ENCODE measurements at regions of chr2 and their contacts with region 1.

Region 1: DNA sequence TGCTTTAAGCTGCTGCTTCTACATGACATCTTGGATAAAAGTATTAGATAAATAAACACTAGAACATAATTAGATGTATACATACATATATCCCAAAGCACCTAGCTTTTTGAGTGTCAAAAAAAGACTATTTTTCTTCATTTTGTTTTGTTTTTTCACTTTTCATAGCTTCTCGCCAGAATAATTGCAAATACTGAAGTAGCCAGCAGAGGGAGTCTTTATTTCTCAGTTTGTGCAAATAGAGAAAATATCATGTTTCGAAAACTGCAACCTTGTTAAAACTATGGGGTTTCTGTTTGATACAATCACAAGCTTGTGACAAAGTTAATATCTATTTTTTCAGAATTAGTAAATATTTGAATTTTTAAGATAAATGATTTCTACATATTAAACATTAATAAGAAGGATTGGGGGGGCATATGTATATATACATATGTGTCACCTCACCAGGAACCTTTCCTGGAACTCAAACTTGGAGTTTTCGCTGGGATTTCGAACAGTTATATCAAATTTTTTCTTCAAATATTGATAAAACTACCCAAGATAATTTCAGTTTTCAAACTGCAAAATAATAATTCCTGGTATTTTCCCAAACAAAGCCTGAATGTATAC is 61.0 kb downstream of the GRB14 start:
- DNase-seq: no peak
- ATAC-seq: no peak

Region 2: GRCh38 chr2:164371916-164372315 is 188.4 kb before region 1 on chr2:
- intact Hi-C with region 1: no loop called
- DNase-seq: no peak
- ATAC-seq: no peak

Region 3: DNA sequence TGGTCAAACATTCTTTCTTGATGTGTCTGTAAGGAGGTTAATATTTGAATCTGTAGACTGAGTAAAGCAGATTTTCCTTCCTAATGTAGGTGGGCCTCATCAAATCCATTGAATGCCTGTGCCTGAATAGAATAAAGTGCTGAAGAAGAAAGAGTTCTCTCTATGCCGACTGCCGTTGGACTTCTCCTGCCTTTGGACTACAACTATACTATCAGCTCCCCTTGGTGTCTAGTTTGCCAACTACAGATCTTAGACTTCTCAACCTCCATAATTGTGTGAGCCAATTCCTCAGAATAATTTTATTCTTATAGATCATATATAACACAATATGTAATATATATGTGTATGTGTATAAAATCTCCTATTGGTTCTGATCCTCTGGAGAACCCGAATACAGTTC is 142.9 kb before region 1 on chr2:
- intact Hi-C with region 1: no loop called
- DNase-seq: no peak
- ATAC-seq: no peak

Region 4: DNA sequence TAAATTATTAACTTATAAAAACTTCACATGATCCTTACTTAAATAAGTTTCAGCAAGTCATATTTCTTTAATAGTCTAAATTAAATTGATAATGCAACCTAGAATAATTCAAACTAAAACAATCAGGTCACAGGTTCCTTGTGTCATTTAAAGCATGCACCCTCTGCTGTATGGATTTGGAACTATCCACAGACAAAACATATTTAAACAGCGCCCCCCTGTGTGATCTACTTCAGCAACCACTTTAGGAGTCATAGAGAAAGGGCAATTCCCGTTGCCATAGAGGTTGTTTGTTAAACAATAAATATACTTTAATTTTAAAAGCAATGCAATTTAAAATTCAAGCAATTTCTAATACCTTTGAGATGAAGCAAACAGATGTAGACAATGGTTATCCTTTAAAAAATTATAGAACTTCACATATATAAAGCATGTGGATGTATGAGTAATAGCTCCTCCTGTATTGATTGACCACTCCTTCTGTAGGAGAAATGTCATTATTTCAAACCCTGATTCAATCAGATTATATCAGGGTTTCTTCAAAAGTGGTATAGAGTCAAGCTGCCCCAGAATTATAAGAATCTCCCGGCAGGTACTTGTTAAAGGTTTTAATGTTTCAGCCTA is 39.8 kb after region 1 on chr2:
- intact Hi-C with region 1: loop called (anchors 2 kb)
- DNase-seq: no peak
- ATAC-seq: peak; percentile 66

Region 5: GRCh38 chr2:164717000-164717803 is 156.9 kb after region 1 on chr2:
- intact Hi-C with region 1: loop called (anchors 5 kb)
- DNase-seq: no peak
- ATAC-seq: no peak

Measured in Right ventricle myocardium inferior (tissue), 1 donor.